Activated CD8-positive, alpha-beta memory T cell treated with anti-CD3 and anti-CD28 coated beads, Interleukin-2, amount 10 ng/mL, durations not matched to agents 7 days and 5 days (primary cell): ENCODE measurements at regions of chr20 and their contacts with region 1.

Region 1: DNA sequence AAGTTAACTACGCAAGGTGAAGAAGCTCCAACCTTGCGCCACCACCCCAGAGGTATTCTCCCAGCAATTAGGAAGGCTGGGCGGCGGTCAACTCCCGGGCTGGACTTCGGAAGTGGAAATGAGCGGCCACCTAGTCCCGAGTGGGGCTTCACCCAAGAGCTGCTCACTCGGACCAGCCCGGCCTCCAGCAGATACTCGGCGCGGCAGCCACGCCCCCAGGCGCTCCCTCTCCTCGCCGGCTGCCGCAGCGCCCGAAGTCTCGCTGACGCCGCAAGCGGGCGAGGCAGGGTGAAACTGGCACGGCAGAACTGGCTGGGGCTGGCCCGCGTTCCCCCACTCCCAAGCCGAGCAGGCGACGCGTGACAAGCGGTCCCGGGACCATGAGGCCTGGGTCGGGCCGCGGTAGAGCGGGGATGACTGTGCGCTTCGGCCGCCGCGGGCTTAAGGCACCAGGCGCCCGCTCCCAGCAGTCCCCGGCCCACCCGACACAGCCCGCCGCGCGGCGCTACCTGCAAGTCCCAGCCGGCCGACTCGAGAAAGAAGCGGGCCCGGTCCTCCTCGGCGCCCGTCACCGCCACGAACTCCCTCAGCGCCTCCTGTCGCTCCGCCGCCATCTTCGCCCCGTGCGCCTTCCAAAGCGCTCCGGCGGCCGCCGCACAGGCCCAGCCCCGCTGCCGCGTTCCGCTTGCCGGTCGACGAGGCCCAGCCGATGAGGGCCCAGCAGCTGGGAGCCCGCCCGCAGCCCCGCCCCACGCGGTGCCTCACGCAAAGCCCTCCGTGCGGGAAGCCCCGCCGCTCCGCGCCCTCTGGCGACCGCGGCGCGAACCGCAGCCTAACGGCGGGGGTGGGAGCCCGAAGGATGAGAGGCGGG is at the start of gene NSFL1C:
- DNase-seq: peak; percentile 97
- ATAC-seq: peak; percentile 98
- H3K4me3 Mint-ChIP-seq: peak within 1 kb of the TSS; percentile 79
- H3K27ac Mint-ChIP-seq: peak within 1 kb of the TSS; percentile 78
- H3K4me1 Mint-ChIP-seq: peaks cover 39% of the 10 kb centered on the region
- H3K27me3 Mint-ChIP-seq: peaks cover 16% of the 10 kb centered on the region
- total RNA-seq, gene NSFL1C: 55.6 to 65.0 TPM

Region 2: DNA sequence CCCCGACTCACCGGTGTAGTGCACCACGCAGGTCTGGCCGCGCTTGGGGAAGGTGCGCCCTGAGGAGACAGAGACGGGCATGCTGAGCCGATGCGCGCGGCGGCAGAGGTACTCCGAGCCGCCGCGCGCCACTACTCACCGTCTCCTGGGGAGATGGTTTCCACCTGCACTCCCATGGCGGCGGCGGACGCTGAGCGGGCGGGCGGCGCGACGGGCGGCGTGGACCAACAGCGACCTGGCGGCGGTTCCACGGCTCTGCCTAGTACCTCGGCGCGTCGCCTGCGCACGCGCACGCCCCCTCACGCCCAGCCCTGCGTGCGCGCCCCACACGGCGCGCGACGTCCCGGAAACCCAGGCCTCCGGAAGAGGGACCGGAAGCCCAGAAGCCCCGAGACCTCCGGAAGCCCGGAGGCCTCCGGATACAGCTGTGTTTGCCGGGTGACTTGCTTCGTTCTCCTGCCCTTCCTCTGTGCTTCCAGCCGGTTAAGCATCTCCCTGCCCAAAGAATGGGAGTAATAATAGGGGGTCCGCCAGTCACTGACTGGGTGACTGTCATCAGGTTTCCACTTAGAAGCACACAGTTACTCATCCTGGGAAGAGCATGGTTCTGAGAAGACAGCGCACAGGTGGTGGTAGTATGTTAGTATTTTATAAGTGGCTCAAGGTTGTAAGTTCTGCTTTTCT is 73.5 kb before region 1 on chr20 and contains the start of gene FKBP1A:
- CTCF ChIA-PET with region 1: interaction called, 24 read pairs
- DNase-seq: peak; percentile 94
- ATAC-seq: peak; percentile 89
- H3K4me3 Mint-ChIP-seq: peak within 1 kb of the TSS; percentile 84
- H3K27ac Mint-ChIP-seq: peak within 1 kb of the TSS; percentile 78
- H3K4me1 Mint-ChIP-seq: peaks cover 58% of the 10 kb centered on the region
- H3K27me3 Mint-ChIP-seq: peaks cover 21% of the 10 kb centered on the region
- total RNA-seq, gene FKBP1A: 247 to 273 TPM

Region 3: DNA sequence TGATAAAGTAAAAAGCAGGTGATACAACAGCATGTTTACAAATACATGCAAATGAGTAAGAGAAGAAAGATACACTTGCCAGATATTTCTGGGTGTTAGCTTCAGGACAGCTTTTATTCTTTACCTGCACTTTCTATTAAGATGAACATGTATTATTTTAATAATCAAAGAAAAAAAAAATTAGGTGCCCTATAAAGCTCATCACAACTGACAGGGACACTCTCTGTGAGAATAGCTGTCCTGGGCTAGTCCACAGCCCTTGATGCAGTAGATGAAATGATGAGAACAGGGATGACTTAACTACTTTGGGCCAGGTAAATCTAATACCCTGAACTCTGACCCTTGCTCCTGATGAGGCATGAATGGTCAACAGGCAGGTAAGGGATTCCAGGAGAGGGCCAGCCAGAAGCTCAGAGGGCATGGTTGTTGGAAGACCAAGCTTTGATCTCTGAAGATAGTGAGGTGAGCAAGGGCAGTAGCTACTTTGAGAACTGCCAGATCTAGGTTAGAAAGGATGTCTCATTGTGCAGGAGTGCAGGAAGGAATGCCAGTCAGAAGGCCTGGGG is 15.4 kb before region 1 on chr20:
- CTCF ChIA-PET with region 1: interaction called, 13 read pairs
- DNase-seq: peak; percentile 27
- ATAC-seq: no peak
- H3K4me3 Mint-ChIP-seq: no peak overlapping the region
- H3K27ac Mint-ChIP-seq: no peak overlapping the region
- H3K4me1 Mint-ChIP-seq: no peaks in the 10 kb centered on the region
- H3K27me3 Mint-ChIP-seq: no peaks in the 10 kb centered on the region

Region 4: DNA sequence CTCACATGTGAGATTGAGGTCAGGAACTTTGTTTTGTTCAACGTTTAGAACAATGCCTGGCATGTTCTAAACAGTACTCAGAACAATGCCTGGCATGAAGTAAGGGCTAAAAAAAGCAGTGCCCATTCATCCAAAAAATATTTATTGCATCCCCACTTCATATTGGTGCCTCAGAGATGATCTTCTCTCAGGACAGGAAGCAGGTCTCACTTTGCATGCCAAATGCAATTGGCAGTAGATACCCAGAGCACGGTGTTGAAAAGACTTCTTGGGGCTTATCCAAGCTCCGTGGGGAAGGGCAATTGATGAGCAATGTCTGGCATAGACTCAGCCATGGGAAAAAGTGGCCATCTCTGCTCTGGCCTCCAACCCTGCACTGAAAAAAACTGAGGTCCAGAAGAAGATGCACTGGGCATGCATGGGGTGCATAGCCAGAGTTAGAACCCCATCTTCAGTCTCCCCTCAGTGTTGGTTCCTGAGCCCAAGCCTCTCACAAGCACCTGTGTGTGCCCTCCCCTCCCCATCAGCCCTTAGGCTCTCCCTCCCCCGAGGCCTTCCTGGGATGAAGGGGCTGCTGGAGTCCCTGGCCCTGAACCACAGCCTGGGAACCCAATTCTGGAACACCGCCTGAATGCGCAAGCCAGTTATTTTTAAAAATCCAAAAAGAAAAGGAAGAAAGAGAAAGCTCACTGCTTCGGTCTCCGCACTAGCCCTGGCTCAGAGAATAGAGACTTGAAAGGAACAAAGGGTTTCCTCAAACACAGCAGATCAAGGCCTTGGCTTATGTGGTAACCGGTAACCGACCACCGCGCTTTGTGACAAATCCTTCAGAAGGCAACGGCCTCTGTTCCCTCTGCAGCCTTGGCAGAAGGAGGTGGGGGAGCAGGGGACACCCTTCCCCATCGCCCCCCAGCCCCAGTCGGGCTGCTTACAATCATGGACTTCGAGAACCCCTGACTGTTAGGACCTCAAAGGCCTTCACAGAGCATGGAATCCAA is 350.2 kb after region 1 on chr20:
- CTCF ChIA-PET with region 1: no interaction called
- DNase-seq: no peak
- ATAC-seq: no peak
- H3K4me3 Mint-ChIP-seq: no peak overlapping the region
- H3K27ac Mint-ChIP-seq: no peak overlapping the region
- H3K4me1 Mint-ChIP-seq: no peaks in the 10 kb centered on the region
- H3K27me3 Mint-ChIP-seq: peaks cover 56% of the 10 kb centered on the region